ENCODE measurements at regions of chr3 and their contacts with region 1.

Region 1: GRCh38 chr3:195774917-195775316 is 36.8 kb downstream of the MUC4 start:
- DNase-seq: peak; percentile 66 to 71 (median 66)
- ATAC-seq: peak; percentile 97
- H3K4me3 ChIP-seq: no peak overlapping the region
- H3K27ac ChIP-seq: no peak overlapping the region
- H3K4me1 ChIP-seq: no peaks in the 10 kb centered on the region; a peak in 1 of 5 replicates
- H3K27me3 ChIP-seq: peaks cover 0 to 24% of the 10 kb centered on the region in 2 experiments; a peak in 2 of 5 replicates
- CTCF ChIP-seq: peak; percentile 78 to 87 (median 83)
- EP300 ChIP-seq: no peak
- POLR2A ChIP-seq: no peak
- RAD21 ChIP-seq: peak; percentile 56 to 69

Region 2: GRCh38 chr3:195442573-195443390 is 332.1 kb before region 1 on chr3 and contains the start of gene ACAP2:
- CTCF ChIA-PET with region 1: no interaction called
- POLR2A ChIA-PET with region 1: no interaction called
- in situ Hi-C with region 1: no loop called
- intact Hi-C with region 1: no loop called
- DNase-seq: peak; percentile 99 to 100 (median 100)
- ATAC-seq: peak; percentile 94
- H3K4me3 ChIP-seq: peak within 1 kb of the TSS; percentile 87
- H3K27ac ChIP-seq: peak within 1 kb of the TSS; percentile 89
- H3K4me1 ChIP-seq: peaks cover 16 to 21% of the 10 kb centered on the region in 2 experiments
- H3K27me3 ChIP-seq: no peaks in the 10 kb centered on the region
- CTCF ChIP-seq: no peak
- EP300 ChIP-seq: no peak
- POLR2A ChIP-seq: peak; percentile 84
- RAD21 ChIP-seq: no peak; a peak in 1 of 4 replicates
- polyA plus RNA-seq, gene ACAP2: 10.6 to 12.3 TPM

Region 3: GRCh38 chr3:195558602-195559001 is 216.3 kb before region 1 on chr3:
- CTCF ChIA-PET with region 1: no interaction called
- POLR2A ChIA-PET with region 1: no interaction called
- in situ Hi-C with region 1: no loop called
- intact Hi-C with region 1: loop called (anchors 5 kb)
- DNase-seq: peak; percentile 41 to 67 (median 54)
- ATAC-seq: peak; percentile 79
- H3K4me3 ChIP-seq: no peak overlapping the region
- H3K27ac ChIP-seq: no peak overlapping the region
- H3K4me1 ChIP-seq: peaks cover 0 to 3% of the 10 kb centered on the region in 2 experiments; a peak in 1 of 5 replicates
- H3K27me3 ChIP-seq: peaks cover 4 to 7% of the 10 kb centered on the region in 2 experiments; a peak in 4 of 5 replicates
- CTCF ChIP-seq: peak; percentile 63 to 86 (median 69)
- EP300 ChIP-seq: no peak
- POLR2A ChIP-seq: no peak
- RAD21 ChIP-seq: peak; percentile 78 to 89

Region 4: DNA sequence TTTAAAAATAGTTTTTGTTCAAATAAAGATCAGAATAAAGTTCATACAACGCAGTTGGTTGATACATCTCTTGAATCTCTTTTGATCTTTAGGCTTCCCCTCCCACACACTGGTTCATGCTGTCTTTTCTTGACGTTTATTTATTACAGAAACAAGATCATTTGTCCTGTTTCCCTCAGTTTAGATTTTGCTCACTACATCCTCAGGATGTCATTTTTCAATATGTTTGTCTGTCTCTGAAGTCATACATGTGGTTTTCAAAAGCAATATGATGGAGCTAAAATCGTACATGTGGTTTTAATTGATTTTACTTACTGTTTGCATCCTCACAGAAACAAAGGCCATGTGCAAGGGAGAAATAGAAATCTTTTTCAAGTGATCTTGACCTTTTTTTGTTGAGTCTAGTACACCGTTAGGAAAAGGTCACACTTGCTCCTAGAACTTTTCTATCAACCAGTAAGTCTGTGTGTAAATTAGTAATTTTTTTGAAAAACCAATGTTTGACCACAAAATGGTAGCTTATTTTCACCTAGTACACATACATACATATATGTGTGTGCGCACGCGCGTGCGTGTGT is 1029.1 kb after region 1 on chr3:
- CTCF ChIA-PET with region 1: no interaction called
- POLR2A ChIA-PET with region 1: no interaction called
- in situ Hi-C with region 1: no loop called
- intact Hi-C with region 1: no loop called
- DNase-seq: no peak
- ATAC-seq: no peak
- H3K4me3 ChIP-seq: no peak overlapping the region
- H3K27ac ChIP-seq: no peak overlapping the region
- H3K4me1 ChIP-seq: no peaks in the 10 kb centered on the region; a peak in 1 of 5 replicates
- H3K27me3 ChIP-seq: no peaks in the 10 kb centered on the region
- CTCF ChIP-seq: no peak
- EP300 ChIP-seq: no peak
- POLR2A ChIP-seq: no peak
- RAD21 ChIP-seq: no peak